ENCODE measurements at regions of chr3 and their contacts with region 1.

Region 1: GRCh38 chr3:44761424-44762169 is at the starts of genes KIAA1143 and KIF15:
- DNase-seq: peak; percentile 92 to 96 (median 93)
- H3K4me3 ChIP-seq: peak within 1 kb of the TSS; percentile 71 to 98
- H3K4me3 Mint-ChIP-seq: peak within 1 kb of the TSS; percentile 86 to 98 (median 92)
- H3K27ac ChIP-seq: peak within 1 kb of the TSS; percentile 84
- H3K27ac Mint-ChIP-seq: peak within 1 kb of the TSS; percentile 92 to 97 (median 94)
- H3K4me1 ChIP-seq: peaks cover 23% of the 10 kb centered on the region
- H3K4me1 Mint-ChIP-seq: peaks cover 21 to 42% (median 33%) of the 10 kb centered on the region in 4 donors
- H3K27me3 ChIP-seq: no peaks in the 10 kb centered on the region
- H3K27me3 Mint-ChIP-seq: peaks cover 0 to 1% of the 10 kb centered on the region in 2 donors
- total RNA-seq, gene KIAA1143: 37.6 to 39.7 TPM
- total RNA-seq, gene KIF15: 0.19 to 0.38 TPM

Region 2: GRCh38 chr3:44477312-44478030 is 284.1 kb before region 1 on chr3 and contains the start of gene ZNF445:
- CTCF ChIA-PET with region 1: no interaction called
- POLR2A ChIA-PET with region 1: no interaction called
- intact Hi-C with region 1: loop called (anchors 1 kb)
- DNase-seq: peak; percentile 72 to 82 (median 81)
- H3K4me3 ChIP-seq: peak within 1 kb of the TSS; percentile 44 to 68
- H3K4me3 Mint-ChIP-seq: peak within 1 kb of the TSS; percentile 93 to 98 (median 94)
- H3K27ac ChIP-seq: peak within 1 kb of the TSS; percentile 42
- H3K27ac Mint-ChIP-seq: peak within 1 kb of the TSS; percentile 79 to 96 (median 90)
- H3K4me1 ChIP-seq: peaks cover 28% of the 10 kb centered on the region
- H3K4me1 Mint-ChIP-seq: peaks cover 17 to 50% (median 32%) of the 10 kb centered on the region in 4 donors
- H3K27me3 ChIP-seq: no peaks in the 10 kb centered on the region
- H3K27me3 Mint-ChIP-seq: no peaks in the 10 kb centered on the region
- total RNA-seq, gene ZNF445: 30.0 to 31.5 TPM

Region 3: DNA sequence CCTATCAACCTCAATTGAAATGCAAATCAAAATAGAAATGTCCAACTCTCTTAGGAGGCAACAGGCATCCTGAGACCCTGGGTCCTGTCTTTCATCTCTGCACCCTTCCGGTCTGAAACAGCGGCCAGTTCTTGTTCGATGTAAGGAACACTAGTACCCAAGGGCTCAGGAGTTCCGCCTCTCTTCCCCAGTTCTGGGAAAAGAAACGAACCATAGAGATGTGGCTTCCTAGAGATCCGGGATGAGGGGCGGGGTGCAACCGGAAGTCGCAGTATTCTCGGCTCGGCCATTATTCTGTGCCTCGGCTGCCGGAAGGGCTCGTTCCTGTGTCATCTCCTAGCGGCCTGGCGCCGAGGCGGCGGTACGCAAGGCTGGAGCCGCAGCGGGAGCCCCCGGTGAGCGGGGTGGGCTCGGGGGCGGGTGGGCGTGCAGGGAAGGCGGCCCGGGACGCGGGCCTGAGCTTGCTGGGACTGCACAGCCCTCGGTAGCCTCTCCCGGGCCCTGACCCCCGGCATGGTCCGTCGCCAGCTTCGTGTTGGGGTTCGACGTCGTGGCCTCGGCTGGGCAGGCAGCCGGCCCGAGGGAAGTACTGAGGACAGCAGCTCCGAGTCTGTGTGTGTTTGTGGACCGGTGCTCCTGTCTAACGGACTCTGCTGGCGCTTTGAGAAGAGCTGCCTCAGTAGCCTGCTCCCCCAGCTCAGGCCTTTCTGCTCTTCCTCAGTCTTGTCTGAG is 136.7 kb before region 1 on chr3 and contains the start of gene ZNF197:
- CTCF ChIA-PET with region 1: no interaction called
- POLR2A ChIA-PET with region 1: interaction called, 7 read pairs
- intact Hi-C with region 1: loop called (anchors 1 kb)
- DNase-seq: peak; percentile 23 to 44 (median 42)
- H3K4me3 ChIP-seq: peak within 1 kb of the TSS; percentile 47 to 59
- H3K4me3 Mint-ChIP-seq: peak within 1 kb of the TSS; percentile 90 to 95 (median 92)
- H3K27ac ChIP-seq: peak within 1 kb of the TSS; percentile 49
- H3K27ac Mint-ChIP-seq: peak within 1 kb of the TSS; percentile 74 to 92 (median 87)
- H3K4me1 ChIP-seq: peaks cover 21% of the 10 kb centered on the region
- H3K4me1 Mint-ChIP-seq: peaks cover 20 to 47% (median 27%) of the 10 kb centered on the region in 4 donors
- H3K27me3 ChIP-seq: no peaks in the 10 kb centered on the region
- H3K27me3 Mint-ChIP-seq: no peaks in the 10 kb centered on the region
- total RNA-seq, gene ZNF197: 18.0 to 18.4 TPM

Region 4: DNA sequence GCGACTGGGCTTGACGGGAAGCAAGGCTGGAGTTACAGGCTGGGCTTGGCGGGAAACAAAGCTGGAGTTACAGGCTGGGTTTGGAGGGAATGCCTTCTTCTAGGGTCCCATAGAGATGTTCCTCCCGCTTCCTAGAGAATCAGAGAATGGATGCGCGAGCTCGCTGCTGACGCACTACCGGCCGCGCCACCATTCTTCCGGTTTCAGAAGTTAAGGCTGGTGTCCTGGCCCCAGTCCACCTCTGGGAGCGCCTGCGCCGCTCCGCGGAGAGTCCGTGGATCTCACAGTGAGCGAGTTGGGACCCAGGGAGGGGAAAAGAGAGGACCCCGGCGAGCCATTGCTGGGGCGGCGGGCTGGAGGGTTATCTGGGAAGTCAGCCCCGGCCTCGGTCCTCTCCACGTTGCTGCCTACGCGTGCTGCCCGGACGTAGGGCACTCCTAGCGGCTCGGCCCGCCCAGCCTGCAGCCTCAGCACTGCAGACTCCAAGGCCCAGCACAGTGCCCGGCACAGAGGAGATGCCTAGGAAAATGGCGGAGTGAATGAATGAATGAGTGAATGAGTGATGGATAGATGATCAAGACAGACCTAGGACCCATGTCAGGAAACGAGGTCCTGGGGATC is 49.0 kb before region 1 on chr3 and contains the start of gene ZNF502:
- CTCF ChIA-PET with region 1: no interaction called
- POLR2A ChIA-PET with region 1: interaction called, 5 read pairs
- intact Hi-C with region 1: loop called (anchors 1 kb)
- DNase-seq: peak; percentile 39 to 53 (median 48)
- H3K4me3 ChIP-seq: peak within 1 kb of the TSS; percentile 18 to 74
- H3K4me3 Mint-ChIP-seq: peak within 1 kb of the TSS; percentile 63 to 96 (median 90)
- H3K27ac ChIP-seq: no peak within 1 kb of the TSS
- H3K27ac Mint-ChIP-seq: peak within 1 kb of the TSS in 6 of 7 donors; percentile 47 to 90 (median 79)
- H3K4me1 ChIP-seq: peaks cover 6% of the 10 kb centered on the region
- H3K4me1 Mint-ChIP-seq: peaks cover 4 to 24% (median 11%) of the 10 kb centered on the region in 4 donors
- H3K27me3 ChIP-seq: no peaks in the 10 kb centered on the region
- H3K27me3 Mint-ChIP-seq: peaks cover 5 to 15% of the 10 kb centered on the region in 2 donors
- total RNA-seq, gene ZNF502: 3.1 to 3.4 TPM

Region 5: GRCh38 chr3:44729384-44729910 is 32.1 kb before region 1 on chr3 and contains the start of gene ZNF501:
- CTCF ChIA-PET with region 1: interaction called, 7 read pairs
- POLR2A ChIA-PET with region 1: interaction called, 50 read pairs
- intact Hi-C with region 1: loop called (anchors 1 kb)
- DNase-seq: peak; percentile 79 to 88 (median 82)
- H3K4me3 ChIP-seq: peak within 1 kb of the TSS; percentile 71 to 79
- H3K4me3 Mint-ChIP-seq: peak within 1 kb of the TSS; percentile 90 to 99 (median 94)
- H3K27ac ChIP-seq: peak within 1 kb of the TSS; percentile 34
- H3K27ac Mint-ChIP-seq: peak within 1 kb of the TSS; percentile 78 to 93 (median 87)
- H3K4me1 ChIP-seq: peaks cover 6% of the 10 kb centered on the region
- H3K4me1 Mint-ChIP-seq: peaks cover 10 to 21% (median 16%) of the 10 kb centered on the region in 4 donors
- H3K27me3 ChIP-seq: no peaks in the 10 kb centered on the region
- H3K27me3 Mint-ChIP-seq: peaks cover 0 to 1% of the 10 kb centered on the region in 2 donors
- total RNA-seq, gene ZNF501: 7.4 to 7.5 TPM

Region 6: DNA sequence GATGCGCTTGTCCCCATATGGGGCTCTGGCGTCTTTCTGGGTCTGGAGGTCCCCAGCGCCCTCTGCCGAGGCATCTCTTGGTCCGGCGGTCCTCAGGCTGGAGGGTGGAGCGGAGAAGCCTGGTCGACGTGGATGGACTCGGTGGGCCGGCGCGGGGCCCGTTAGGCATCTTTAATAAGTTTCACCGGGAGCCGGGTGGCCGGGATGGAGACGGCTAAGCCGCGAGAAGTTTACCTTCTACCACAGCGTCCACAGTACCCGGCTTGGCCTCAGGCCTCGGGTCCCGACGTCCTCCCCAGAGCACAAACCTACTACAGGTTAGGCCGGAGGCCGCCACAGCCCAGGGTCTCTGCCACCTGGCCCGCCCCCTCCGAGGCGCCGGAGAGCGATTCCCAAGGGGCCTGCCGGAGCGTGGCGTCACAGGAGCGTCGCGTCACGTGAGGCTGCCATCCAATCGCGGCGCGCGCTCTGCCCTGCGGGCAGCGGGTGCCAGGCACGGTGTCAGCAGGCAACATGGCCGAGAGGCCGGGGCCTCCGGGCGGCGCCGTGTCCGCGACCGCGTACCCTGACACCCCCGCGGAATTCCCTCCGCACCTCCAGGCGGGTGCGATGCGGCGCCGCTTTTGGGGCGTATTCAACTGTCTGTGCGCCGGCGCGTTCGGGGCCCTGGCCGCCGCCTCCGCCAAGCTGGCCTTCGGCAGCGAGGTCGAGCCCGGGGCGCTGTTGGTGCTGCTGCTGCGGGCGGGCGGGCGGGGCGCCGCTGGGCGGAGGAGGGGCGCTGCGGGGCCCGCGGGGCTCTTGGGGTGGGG is 100.0 kb after region 1 on chr3 and contains the start of gene TMEM42:
- CTCF ChIA-PET with region 1: no interaction called
- POLR2A ChIA-PET with region 1: interaction called, 6 read pairs
- intact Hi-C with region 1: loop called (anchors 1 kb)
- DNase-seq: peak; percentile 84 to 91 (median 88)
- H3K4me3 ChIP-seq: peak within 1 kb of the TSS; percentile 46 to 85
- H3K4me3 Mint-ChIP-seq: peak within 1 kb of the TSS; percentile 88 to 93 (median 90)
- H3K27ac ChIP-seq: peak within 1 kb of the TSS; percentile 88
- H3K27ac Mint-ChIP-seq: peak within 1 kb of the TSS; percentile 90 to 98 (median 94)
- H3K4me1 ChIP-seq: peaks cover 38% of the 10 kb centered on the region
- H3K4me1 Mint-ChIP-seq: peaks cover 19 to 47% (median 36%) of the 10 kb centered on the region in 4 donors
- H3K27me3 ChIP-seq: no peaks in the 10 kb centered on the region
- H3K27me3 Mint-ChIP-seq: no peaks in the 10 kb centered on the region
- total RNA-seq, gene TMEM42: 26.1 to 29.6 TPM

Region 7: DNA sequence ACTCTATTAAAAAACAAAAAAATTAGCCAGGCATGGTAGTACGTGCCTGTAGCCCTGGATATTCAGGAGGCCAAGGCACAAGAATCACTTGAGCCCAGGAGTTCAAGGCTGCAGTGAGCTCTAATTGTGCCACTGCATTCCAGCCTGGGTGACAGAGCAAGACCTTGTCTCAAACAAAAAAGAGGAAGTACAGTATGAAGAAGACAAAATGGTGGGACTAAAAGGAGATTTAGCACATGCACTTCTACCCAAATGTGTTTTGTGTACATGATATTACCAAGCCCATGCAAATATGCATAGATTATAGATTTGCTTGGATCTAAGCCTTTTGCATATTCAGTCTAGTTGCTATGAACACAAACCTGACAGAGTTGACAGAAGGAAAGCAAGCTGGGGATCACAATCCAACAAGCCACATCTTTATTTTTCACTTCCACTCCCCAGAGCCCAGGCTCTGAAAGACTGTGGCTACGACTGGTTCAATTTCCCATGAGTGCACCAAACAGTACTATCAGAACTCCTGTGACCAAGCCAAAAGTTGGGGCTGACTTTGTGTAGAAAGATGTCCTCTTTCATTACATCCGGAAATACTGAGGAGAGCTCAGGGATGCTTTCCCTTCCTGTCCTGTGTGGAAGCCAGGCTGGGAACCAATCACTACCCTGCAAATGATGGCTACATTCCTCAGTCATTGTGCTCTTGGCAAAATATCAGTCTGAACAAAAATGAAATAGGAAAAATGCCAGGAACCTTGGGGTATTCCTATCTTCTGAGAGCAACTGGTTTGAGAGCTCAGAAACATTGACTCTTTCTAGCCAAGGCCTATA is 162.2 kb after region 1 on chr3:
- CTCF ChIA-PET with region 1: no interaction called
- POLR2A ChIA-PET with region 1: no interaction called
- intact Hi-C with region 1: no loop called
- DNase-seq: no peak
- H3K4me3 ChIP-seq: no peak overlapping the region
- H3K4me3 Mint-ChIP-seq: no peak overlapping the region
- H3K27ac ChIP-seq: no peak overlapping the region
- H3K27ac Mint-ChIP-seq: peak overlapping the region in 2 of 7 donors; percentile 29 to 51
- H3K4me1 ChIP-seq: no peaks in the 10 kb centered on the region
- H3K4me1 Mint-ChIP-seq: no peaks in the 10 kb centered on the region
- H3K27me3 ChIP-seq: no peaks in the 10 kb centered on the region
- H3K27me3 Mint-ChIP-seq: no peaks in the 10 kb centered on the region

Region 8: DNA sequence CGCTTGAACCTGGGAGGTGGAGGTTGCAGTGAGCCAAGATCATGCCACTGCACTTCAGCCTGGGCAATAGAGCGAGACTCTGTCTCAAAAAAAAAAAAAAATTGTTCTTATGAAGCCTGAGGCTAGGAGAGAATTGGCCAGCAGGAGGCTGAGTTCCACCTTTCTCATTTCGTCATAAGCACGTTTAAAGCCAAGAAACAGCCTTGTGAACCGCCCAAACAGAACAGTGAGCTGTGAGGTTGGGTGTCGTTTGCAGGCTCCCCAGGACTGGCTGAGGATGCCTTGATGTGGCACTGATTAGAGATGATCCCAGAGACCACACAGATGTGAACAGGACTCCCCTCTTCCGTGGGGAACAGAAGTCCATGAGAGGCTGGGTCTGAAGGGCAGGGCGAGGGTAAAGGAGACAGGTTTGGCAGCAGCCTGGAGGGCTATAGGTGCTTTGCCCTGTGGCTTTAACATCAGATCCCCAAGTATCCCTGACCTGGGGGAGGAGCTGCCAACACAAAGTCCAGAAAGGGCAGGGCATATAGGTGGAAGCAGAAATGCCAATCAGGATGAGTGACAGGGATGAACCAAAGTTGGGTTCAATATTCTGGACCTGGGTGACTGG is 317.4 kb after region 1 on chr3:
- CTCF ChIA-PET with region 1: no interaction called
- POLR2A ChIA-PET with region 1: no interaction called
- intact Hi-C with region 1: no loop called
- DNase-seq: no peak
- H3K4me3 ChIP-seq: no peak overlapping the region
- H3K4me3 Mint-ChIP-seq: peak overlapping the region in 1 of 8 donors; percentile 24
- H3K27ac ChIP-seq: no peak overlapping the region
- H3K27ac Mint-ChIP-seq: no peak overlapping the region
- H3K4me1 ChIP-seq: no peaks in the 10 kb centered on the region
- H3K4me1 Mint-ChIP-seq: peaks cover 0 to 4% (median 0%) of the 10 kb centered on the region in 4 donors
- H3K27me3 ChIP-seq: no peaks in the 10 kb centered on the region
- H3K27me3 Mint-ChIP-seq: peaks cover 4 to 5% of the 10 kb centered on the region in 2 donors